Sciatic nerve (tissue), 2 donors: ENCODE measurements at regions of chr14 and their contacts with region 1.

Region 1: DNA sequence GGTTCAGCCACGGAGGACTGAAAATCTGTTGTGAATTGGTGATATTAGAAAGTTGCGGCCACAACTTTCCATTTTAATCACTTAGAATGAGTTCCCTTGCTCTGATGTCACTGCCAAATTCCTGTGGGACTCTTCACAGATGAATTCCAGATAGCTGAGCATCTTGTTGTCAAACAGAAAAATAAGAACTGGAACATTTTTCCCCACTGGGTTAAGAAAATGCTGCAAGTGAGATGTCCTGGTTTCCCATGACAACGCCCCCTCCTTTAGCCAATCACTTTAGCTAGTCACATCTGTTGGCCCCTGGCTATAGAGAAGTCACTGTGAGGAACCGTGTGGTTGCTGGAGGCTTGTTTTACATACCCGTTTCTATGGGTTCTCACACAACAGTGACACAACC is 135.9 kb downstream of the KTN1 start:
- DNase-seq: no peak
- ATAC-seq: peak; percentile 97

Region 2: GRCh38 chr14:55699131-55700057 is 16.5 kb before region 1 on chr14:
- intact Hi-C with region 1: no loop called
- DNase-seq: no peak
- ATAC-seq: no peak

Region 3: GRCh38 chr14:56339855-56340701 is 624.2 kb after region 1 on chr14:
- intact Hi-C with region 1: loop called (anchors 10 kb)
- DNase-seq: peak; percentile 86
- ATAC-seq: peak; percentile 94

Region 4: GRCh38 chr14:56933478-56933877 is 1217.6 kb after region 1 on chr14:
- intact Hi-C with region 1: no loop called
- DNase-seq: no peak
- ATAC-seq: no peak